ENCODE measurements at regions of chr5 and their contacts with region 1.

Region 1: DNA sequence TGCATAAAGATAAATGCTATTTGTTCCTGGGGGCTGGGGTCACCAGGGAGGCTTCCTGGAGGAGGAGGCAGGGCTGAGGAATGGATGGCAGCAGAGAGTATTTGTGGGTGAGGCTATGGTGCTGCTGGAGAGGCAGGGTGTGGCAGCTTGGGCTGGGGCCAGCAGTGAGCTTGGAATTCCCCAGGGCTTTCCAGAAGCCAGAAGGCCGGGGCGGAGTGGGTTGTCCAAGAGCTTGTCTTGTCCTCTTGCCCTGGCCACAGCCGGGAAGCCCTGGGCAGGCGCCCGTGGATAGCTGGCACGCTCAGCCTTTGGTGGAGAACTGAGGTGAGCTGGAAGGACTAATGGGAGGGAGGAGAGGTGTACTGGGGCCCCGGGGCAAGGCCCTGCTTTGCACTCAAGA is 27.1 kb upstream of the CNOT6 start:
- DNase-seq: no peak
- H3K4me3 ChIP-seq: no peak overlapping the region
- H3K27ac ChIP-seq: no peak overlapping the region
- H3K4me1 ChIP-seq: peaks cover 0 to 16% (median 4%) of the 10 kb centered on the region in 3 donors
- H3K27me3 ChIP-seq: peaks cover 0 to 34% (median 0%) of the 10 kb centered on the region in 4 donors
- CTCF ChIP-seq: no peak
- POLR2A ChIP-seq: no peak

Region 2: DNA sequence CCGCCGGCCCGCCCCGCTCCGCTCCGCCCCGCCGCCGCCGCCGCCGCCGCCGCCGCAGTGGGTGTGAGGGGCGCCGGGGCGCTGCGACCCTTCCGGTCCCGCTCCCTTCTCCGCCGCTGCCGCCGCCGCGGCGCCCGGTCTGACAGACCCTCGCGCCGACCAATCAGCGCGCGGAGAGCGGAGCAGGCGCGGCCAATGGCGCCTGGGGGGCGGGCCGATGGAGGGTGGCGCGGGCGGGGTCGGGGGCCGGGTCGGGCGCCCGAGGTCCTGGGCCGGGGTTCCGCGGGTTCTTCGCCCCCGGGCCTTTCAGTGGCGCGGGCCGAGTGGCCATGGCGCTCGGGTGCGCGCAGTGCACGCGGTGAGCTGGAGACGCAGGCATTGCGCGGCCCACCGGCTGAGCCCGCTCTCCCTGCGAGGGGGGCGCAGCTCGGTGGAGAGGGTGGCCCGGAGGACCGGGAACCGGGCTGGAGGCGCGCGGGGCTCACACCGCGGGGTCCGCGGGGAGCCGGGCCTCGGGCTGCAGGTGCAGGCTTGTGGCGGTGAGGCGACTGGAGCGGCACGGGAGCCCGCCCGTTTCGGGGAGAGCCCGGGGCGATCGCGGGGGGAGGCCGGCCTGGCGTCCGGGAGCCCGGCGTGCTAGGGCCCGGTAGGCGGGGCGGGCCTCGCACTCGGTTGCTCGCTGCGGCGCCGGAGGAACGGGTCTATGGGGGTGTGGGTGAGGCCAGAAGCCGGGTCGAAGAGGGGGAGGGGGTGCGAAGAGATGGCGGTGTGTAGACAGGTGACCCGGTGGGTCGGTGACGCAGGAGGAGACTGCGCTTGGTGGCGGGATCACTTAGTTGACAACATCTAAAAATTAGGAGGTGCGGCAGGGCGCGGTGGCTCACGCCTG is 174.9 kb before region 1 on chr5 and contains the start of gene MAPK9:
- intact Hi-C with region 1: loop called (anchors 10 kb)
- DNase-seq: no peak
- H3K4me3 ChIP-seq: peak within 1 kb of the TSS; percentile 81 to 100 (median 92)
- H3K27ac ChIP-seq: peak within 1 kb of the TSS; percentile 91 to 95 (median 94)
- H3K4me1 ChIP-seq: peaks cover 13 to 60% (median 22%) of the 10 kb centered on the region in 3 donors
- H3K27me3 ChIP-seq: no peaks in the 10 kb centered on the region
- CTCF ChIP-seq: no peak
- POLR2A ChIP-seq: peak in 1 of 4 donors; percentile 65
- total RNA-seq, gene MAPK9: 14.5 to 27.3 (median 20.5) TPM

Region 3: DNA sequence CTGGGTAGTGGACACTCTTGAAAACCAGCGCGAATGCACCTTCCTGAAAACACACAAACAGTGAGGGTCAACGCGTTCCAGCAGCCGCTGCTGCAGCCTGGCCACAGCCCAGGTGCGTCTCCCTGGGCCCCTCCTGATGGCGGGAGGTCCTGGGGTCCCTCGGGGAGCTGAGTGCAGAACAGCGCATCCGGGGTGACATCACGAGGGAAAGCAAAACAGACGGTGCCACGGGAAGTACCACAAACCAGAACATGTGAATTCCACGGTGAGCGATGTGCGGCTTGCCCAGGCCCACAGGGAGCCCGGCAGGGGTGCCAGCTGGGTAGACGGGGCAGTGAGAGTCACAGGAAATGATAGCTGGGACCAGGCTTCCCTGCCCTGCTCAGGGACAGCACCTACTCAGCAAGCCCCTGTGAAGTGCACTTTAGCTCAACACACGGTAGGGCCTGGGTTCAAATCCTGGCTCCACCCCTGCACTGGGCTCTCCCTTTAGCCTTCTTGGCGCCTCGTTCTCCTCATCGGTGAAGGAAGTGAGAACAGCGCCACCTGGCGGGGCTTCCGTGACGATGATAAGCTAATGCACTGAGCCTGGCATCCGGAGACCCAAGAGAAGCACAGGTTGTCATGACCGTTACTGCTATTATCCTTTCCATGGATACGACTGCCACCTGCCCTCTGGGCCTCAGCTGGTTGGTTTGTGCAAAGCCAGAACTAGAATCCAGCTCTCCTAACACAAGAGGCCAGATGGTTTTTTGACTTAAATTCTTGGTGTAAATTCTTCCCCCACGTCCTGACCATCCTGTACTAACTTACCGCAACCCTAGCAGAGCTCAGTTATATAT is 138.5 kb before region 1 on chr5:
- intact Hi-C with region 1: loop called (anchors 10 kb)
- DNase-seq: peak; percentile 22
- H3K4me3 ChIP-seq: no peak overlapping the region
- H3K27ac ChIP-seq: no peak overlapping the region
- H3K4me1 ChIP-seq: peaks cover 0 to 47% (median 23%) of the 10 kb centered on the region in 3 donors
- H3K27me3 ChIP-seq: no peaks in the 10 kb centered on the region
- CTCF ChIP-seq: peak; percentile 56 to 78 (median 67)
- POLR2A ChIP-seq: no peak

Region 4: DNA sequence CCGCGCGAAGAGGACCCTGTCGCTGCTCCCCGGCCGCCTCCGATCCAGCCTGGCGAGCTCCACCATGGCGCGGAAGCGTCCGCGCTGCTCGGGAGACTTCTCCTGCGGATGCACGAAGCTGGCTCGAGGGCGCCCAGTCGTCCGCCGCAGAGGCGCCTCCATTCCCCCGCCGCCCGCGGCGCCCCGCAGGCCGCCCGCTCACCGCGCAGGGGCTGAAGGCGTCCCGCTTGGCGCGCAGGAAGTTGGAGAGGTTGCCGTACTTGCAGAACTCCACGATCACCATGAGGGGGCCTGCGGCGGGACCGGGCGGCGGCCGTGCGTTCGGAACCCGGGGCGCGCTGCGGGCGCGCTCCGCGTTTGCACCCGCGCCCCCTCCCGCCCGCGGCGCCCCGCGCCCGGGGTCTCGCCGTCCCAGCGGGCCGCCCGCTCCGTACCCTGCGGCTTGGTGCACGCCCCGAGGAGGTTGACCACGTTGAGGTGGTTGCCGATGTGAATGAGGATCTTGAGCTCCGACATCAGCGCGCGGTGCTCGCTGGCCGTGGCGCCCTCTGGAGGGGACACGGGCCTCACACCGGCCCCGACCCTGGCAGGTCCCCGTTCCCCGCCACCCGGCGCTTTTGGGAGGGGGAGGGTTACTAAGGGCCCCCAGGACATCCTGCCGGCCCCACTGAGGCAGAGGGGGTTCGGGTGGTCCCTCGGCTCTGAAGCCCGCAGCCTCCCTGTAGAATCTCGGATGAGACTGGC is 151.9 kb after region 1 on chr5:
- intact Hi-C with region 1: no loop called
- DNase-seq: no peak
- H3K4me3 ChIP-seq: peak overlapping the region in 2 of 4 donors; percentile 26 to 53
- H3K27ac ChIP-seq: no peak overlapping the region
- H3K4me1 ChIP-seq: peaks cover 0 to 12% (median 0%) of the 10 kb centered on the region in 3 donors
- H3K27me3 ChIP-seq: peaks cover 0 to 51% (median 0%) of the 10 kb centered on the region in 4 donors
- CTCF ChIP-seq: peak in 1 of 6 experiments; percentile 18
- POLR2A ChIP-seq: no peak